Dendritic cell treated with granulocyte-macrophage colony-stimulating factor and Interleukin-4, amounts not matched to agents 40 ng/mL and 50 ng/mL, for 4 days (primary cell): ENCODE measurements at regions of chr1 and their contacts with region 1.

Region 1: GRCh38 chr1:229227298-229227919 is 43.5 kb upstream of the RAB4A start:
- H3K4me3 Mint-ChIP-seq: no peak overlapping the region
- H3K27ac Mint-ChIP-seq: peak overlapping the region; percentile 49
- H3K4me1 Mint-ChIP-seq: peaks cover 62% of the 10 kb centered on the region
- H3K27me3 Mint-ChIP-seq: peaks cover 5% of the 10 kb centered on the region

Region 2: GRCh38 chr1:228664399-228664914 is 563.0 kb before region 1 on chr1:
- intact Hi-C with region 1: loop called (anchors 1 kb)
- H3K4me3 Mint-ChIP-seq: no peak overlapping the region
- H3K27ac Mint-ChIP-seq: no peak overlapping the region
- H3K4me1 Mint-ChIP-seq: peaks cover 7% of the 10 kb centered on the region
- H3K27me3 Mint-ChIP-seq: peaks cover 20% of the 10 kb centered on the region

Region 3: GRCh38 chr1:228734881-228735801 is 492.3 kb before region 1 on chr1 and contains the start of gene RHOU:
- intact Hi-C with region 1: loop called (anchors 5 kb)
- H3K4me3 Mint-ChIP-seq: peak within 1 kb of the TSS; percentile 92
- H3K27ac Mint-ChIP-seq: peak within 1 kb of the TSS; percentile 84
- H3K4me1 Mint-ChIP-seq: peaks cover 43% of the 10 kb centered on the region
- H3K27me3 Mint-ChIP-seq: peaks cover 4% of the 10 kb centered on the region

Region 4: DNA sequence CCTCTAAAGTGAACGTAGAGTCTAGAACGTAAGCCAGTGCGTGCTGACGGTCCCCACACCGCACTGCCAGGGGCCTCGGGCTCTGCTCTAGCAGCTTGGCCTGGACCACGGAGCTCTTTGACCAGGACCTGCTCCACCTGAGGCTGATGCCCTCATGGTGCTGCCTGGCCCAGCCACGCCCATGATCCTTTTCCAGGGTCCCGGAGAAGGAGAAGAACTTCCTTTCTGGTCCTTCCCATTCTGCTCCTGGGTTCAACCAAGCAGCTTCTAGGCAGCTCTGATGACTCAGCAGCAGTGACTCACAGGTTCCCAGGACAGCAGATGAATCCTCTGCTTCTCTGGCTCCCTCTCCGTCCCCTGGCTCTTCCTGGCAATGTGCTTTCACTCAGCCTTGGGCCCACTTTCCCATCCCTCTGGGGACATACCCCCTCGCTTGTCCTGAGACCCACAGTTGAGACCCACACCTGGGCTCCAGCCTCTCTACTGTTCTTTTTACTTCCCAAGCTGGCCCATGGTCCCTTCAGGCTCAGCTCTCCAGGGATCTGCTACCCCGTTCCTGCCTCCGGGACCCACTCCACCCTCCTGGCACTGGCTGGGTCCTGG is 202.8 kb before region 1 on chr1:
- intact Hi-C with region 1: loop called (anchors 10 kb)
- H3K4me3 Mint-ChIP-seq: no peak overlapping the region
- H3K27ac Mint-ChIP-seq: peak overlapping the region; percentile 61
- H3K4me1 Mint-ChIP-seq: peaks cover 63% of the 10 kb centered on the region
- H3K27me3 Mint-ChIP-seq: peaks cover 2% of the 10 kb centered on the region

Region 5: DNA sequence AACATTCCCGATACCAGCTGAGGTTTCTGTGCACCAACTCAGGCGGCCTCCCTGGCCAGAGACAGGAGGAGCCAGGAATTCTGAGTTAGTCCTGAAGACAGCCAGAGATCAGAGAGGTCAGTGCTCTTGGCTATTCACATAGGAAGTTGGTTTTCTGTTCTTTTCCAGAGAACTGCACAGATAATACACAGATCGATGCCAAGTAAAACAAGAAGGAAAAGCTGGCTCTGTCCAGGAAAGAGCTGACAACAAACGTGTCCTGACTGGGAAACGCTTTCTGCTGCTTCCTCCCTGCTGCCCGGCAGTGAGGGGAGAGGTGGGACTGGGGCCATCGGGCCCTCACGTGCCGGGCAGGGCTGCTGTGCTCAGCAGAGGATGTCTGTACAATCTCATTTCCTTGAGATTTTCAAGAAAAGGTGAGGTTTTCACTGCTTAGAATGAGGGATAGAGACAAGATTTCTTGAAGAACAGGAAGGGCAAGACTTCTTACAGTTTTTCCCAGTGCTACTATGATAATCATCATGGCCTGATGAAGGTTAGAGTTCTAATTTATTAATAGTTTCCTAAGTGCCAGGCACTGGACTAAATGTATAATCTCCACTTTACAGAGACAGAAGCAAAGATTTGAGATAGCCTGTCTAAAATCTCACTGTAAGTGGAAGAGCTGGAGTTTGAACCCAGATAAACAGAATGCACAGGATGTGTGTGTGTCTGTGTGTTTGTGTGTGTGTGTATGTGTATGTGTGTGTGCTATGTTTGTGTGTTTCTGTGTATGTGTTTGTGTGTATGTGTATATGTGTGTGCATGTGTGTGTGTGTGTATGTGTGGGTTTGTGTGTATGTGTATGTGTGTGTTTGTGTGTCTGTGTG is 167.5 kb before region 1 on chr1:
- intact Hi-C with region 1: loop called (anchors 10 kb)
- H3K4me3 Mint-ChIP-seq: no peak overlapping the region
- H3K27ac Mint-ChIP-seq: no peak overlapping the region
- H3K4me1 Mint-ChIP-seq: peaks cover 47% of the 10 kb centered on the region
- H3K27me3 Mint-ChIP-seq: peaks cover 15% of the 10 kb centered on the region